Gastrocnemius medialis (tissue), 4 donors: ENCODE measurements at regions of chr11 and their contacts with region 1.

Region 1: GRCh38 chr11:70191495-70192140 is 11.5 kb upstream of the FADD start:
- DNase-seq: peak; percentile 25 to 40
- ATAC-seq: peak; percentile 57 to 66
- H3K4me3 ChIP-seq: no peak overlapping the region
- H3K27ac ChIP-seq: no peak overlapping the region
- H3K4me1 ChIP-seq: no peaks in the 10 kb centered on the region
- H3K27me3 ChIP-seq: no peaks in the 10 kb centered on the region
- CTCF ChIP-seq: peak; percentile 69 to 82 (median 77)
- POLR2A ChIP-seq: no peak

Region 2: DNA sequence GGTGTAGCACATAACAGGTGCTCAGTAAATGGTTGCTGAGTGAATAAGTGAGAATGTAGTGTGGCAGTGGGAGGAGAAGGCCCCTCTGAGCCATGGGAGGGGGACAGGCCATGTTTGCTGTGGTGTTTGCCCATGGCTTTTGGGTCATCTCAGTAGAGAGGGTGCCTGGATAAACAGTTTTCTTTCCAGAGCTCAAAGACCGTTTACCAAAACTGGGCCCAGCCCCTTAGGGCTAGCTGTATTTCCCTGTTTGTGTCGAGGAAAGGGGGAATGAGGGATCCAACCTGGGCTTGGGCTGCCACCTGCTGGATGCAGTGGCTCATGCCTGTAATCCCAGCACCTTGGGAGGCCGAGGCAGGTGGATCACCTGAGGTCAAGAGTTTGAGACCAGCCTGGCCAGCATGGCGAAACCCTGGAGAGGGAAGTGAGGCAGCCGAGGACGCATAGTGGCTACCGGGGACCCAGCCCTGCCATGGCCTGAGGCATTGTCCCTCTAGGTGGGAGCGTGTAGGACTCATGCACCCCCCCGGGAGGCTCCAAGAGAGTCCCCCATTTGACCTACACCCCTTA is 507.8 kb before region 1 on chr11:
- in situ Hi-C with region 1: loop called in 3 of 4 experiments (anchors 10 kb)
- intact Hi-C with region 1: loop called (anchors 2 kb)
- DNase-seq: no peak
- ATAC-seq: no peak
- H3K4me3 ChIP-seq: no peak overlapping the region
- H3K27ac ChIP-seq: no peak overlapping the region
- H3K4me1 ChIP-seq: peaks cover 0 to 8% of the 10 kb centered on the region in 2 donors
- H3K27me3 ChIP-seq: peaks cover 0 to 2% (median 0%) of the 10 kb centered on the region in 3 donors
- CTCF ChIP-seq: no peak
- POLR2A ChIP-seq: no peak

Region 3: DNA sequence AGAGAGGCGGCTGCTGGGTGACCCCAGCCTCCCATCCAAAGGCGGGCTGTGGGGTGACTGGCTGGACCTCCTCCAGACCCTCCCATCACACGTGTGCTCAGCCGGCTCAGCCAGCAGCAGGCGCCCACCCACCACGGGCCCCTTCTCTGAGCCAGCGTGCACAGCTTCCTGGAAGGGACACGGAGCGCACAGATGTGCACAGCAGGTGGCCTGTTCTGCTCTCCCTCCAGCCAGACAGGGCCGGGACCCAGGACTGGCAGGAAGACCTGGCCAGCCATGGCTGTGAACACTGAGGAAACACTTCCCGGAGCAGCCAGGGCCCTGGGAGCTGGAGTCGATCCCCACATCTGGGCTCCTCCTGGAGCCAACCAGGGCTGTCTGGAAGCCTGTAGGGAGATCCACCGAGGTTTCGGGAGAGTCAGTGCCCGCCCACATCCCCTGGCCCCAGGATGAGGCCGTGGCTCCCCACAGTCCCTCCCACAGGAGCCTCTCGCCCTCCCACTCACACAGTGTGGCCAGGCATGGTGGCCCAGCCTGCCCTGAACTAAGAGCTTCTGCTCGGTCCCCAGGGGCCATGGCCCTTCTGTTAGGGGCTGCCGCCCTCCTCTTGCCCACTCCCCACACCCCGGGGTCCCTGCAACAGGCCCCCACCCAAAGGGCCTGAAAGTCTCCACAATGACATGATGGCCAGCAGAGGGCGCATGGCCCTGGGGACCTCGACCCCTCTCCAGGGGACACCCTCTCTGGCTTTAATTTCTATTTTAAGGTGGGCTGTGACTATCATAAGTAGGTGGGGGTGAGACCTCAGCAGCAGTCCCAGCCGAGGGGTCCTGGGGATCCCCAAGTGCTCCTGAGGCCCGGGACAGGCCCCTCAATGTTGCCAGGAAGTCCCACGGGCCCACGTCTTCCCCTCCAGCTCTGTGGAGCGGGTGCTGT is 281.8 kb before region 1 on chr11:
- in situ Hi-C with region 1: loop called in 3 of 4 experiments (anchors 5 kb)
- intact Hi-C with region 1: no loop called
- DNase-seq: no peak
- ATAC-seq: no peak
- H3K4me3 ChIP-seq: no peak overlapping the region
- H3K27ac ChIP-seq: no peak overlapping the region
- H3K4me1 ChIP-seq: no peaks in the 10 kb centered on the region
- H3K27me3 ChIP-seq: peaks cover 0 to 28% (median 16%) of the 10 kb centered on the region in 3 donors
- CTCF ChIP-seq: peak in 4 of 5 experiments; percentile 14 to 53 (median 34)
- POLR2A ChIP-seq: no peak

Region 4: DNA sequence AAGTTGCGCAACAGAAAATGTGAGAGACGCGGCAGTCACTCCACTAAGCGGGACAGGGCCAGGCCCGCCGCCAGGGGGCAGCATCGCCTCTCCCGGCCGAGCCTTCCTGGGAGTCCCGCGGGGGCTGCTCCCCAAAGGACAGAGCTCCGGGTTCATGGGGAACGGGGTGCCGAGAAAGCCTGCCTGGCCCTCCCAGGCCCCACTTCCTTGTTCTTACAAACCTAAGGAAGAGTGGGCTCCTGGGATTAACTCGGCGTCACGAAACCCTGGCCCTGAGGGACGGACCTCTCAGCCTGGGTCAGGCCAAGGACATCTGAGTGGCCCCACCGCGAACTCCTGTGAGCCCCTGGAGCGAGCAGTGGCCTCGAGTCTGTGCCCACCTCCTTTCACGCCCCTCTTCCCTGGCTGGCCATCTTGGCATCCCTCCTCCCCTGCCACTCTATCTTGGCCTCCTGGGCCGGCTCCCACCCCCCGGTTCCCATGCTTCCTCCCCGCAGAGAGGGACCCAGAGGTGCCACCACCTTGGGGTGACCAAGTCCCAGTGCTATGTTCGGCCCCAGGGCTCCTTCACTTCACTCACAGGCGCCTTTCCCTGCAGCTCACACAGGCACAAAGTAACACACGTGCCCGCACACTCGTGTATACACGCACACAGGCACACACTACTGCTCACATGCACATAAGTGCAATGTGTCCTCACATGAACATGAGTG is 272.5 kb before region 1 on chr11:
- in situ Hi-C with region 1: loop called (anchors 5 to 10 kb)
- intact Hi-C with region 1: loop called (anchors 1 kb)
- DNase-seq: peak; percentile 21 to 33
- ATAC-seq: peak; percentile 19 to 53
- H3K4me3 ChIP-seq: no peak overlapping the region
- H3K27ac ChIP-seq: peak overlapping the region; percentile 46 to 65 (median 62)
- H3K4me1 ChIP-seq: peaks cover 11 to 16% of the 10 kb centered on the region in 2 donors
- H3K27me3 ChIP-seq: peaks cover 0 to 14% (median 0%) of the 10 kb centered on the region in 3 donors
- CTCF ChIP-seq: peak; percentile 77 to 91 (median 84)
- POLR2A ChIP-seq: no peak

Region 5: DNA sequence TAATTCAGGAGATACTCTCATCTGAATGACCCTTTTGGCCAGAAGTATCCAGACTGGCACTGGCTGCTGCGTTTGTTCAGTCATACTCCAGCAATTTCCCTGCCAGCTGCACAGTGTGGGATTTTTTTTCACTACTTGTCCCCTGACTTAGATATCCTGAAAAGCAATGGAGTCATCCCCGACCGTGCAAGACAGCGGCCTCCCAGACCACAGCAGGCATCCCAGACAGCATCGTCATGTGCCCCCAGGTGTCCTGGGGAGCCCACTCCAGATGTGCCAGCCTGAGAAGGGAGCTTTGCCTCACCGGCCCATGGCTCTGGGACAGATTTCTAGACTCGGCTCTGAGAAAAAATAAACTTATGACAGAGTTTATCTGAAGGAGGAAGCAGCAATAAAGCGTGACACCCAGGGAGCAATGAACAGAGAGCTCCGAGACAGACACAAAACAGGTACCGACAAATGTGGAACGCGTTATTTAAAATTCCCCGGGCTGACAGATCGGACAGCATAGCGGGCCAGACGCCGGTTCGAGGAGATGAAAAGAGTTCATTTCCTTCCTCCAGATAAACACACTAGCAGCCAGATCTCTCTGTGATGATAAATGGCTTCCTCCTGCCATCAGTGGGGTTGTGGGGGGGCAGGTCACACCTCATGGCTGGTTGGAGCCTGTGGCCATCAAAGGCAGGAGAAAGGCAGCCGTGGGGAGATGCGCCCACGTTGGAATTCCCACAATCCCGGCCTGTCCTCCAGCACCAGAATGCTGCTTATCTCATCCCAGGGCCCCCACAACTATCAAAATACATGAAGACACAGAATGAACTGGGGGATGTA is 266.0 kb before region 1 on chr11:
- in situ Hi-C with region 1: loop called in 1 of 4 experiments (anchors 10 kb)
- intact Hi-C with region 1: no loop called
- DNase-seq: no peak
- ATAC-seq: no peak
- H3K4me3 ChIP-seq: no peak overlapping the region
- H3K27ac ChIP-seq: no peak overlapping the region
- H3K4me1 ChIP-seq: no peaks in the 10 kb centered on the region
- H3K27me3 ChIP-seq: peaks cover 0 to 17% (median 5%) of the 10 kb centered on the region in 3 donors
- CTCF ChIP-seq: no peak
- POLR2A ChIP-seq: no peak